SK-N-SH (cell line): ENCODE measurements at regions of chr7 and their contacts with region 1.

Region 1: GRCh38 chr7:5997222-5997808 is 11.5 kb downstream of the PMS2 start:
- DNase-seq: peak; percentile 74
- H3K4me3 ChIP-seq: no peak overlapping the region; a peak in 1 of 4 replicates
- H3K27ac ChIP-seq: 0 out of 4 replicates have a peak overlapping the region, but pooled peaks of 1 of the 2 experiments have one; percentile 5
- H3K4me1 ChIP-seq: peaks cover 0 to 3% of the 10 kb centered on the region in 2 experiments; a peak in 2 of 4 replicates
- H3K27me3 ChIP-seq: no peaks in the 10 kb centered on the region
- CTCF ChIP-seq: peak; percentile 95
- EP300 ChIP-seq: no peak
- RAD21 ChIP-seq: peak; percentile 89

Region 2: DNA sequence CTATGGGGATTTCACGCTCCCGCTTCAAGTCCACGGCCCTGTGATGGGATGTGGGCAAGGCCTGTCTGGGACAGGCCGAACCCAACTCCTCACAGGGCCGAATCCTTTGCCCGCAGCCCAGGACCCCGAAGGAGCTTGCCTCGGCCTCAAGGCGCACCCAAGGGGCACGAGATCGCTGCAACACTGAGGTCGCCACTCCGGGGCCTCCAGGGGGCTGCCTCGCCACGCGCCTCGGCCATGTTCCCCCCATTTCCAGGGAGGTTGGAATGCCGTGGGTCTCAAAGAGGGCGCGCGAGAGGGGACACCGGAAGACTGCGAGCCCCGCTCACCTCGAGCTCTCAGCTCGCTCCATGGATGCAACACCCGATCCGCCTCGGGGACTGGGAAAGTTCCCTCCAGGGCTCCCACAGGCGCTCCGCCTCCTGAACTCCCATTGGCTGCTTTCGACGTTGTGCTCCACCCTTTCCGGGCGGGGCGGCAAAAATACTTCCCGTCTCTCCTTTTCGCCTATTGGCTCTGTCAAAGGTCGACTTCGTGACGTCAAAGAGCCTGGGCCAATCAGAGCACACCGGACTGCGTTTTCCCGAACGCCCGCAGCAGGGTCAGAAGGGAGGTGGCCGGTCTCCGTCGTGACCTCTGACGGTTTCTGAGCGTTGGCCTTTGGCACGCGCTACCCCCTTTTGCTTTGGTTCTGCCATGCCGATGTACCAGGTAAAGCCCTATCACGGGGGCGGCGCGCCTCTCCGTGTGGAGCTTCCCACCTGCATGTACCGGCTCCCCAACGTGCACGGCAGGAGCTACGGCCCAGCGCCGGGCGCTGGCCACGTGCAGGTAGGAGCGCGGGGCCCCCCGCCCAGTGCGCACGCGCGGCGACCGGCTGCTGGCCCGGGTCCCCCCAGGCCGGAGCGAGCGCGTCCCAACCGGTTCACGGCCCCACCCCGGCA is 11.6 kb after region 1 on chr7 and contains the starts of genes AIMP2 and PMS2:
- CTCF ChIA-PET with region 1: interaction called, 33 read pairs
- POLR2A ChIA-PET with region 1: interaction called, 3 read pairs
- DNase-seq: peak; percentile 99
- H3K4me3 ChIP-seq: peak within 1 kb of the TSS; percentile 68 to 96
- H3K27ac ChIP-seq: peak within 1 kb of the TSS; percentile 76 to 83
- H3K4me1 ChIP-seq: peaks cover 3 to 8% of the 10 kb centered on the region in 2 experiments; a peak in 1 of 4 replicates
- H3K27me3 ChIP-seq: no peaks in the 10 kb centered on the region
- CTCF ChIP-seq: peak; percentile 28
- EP300 ChIP-seq: no peak
- RAD21 ChIP-seq: peak; percentile 24; the same call in 1 of the 2 replicates
- polyA plus RNA-seq, gene AIMP2: 98.9 and 104 TPM in 2 replicates
- polyA plus RNA-seq, gene PMS2: 9.6 and 11.4 TPM in 2 replicates

Region 3: DNA sequence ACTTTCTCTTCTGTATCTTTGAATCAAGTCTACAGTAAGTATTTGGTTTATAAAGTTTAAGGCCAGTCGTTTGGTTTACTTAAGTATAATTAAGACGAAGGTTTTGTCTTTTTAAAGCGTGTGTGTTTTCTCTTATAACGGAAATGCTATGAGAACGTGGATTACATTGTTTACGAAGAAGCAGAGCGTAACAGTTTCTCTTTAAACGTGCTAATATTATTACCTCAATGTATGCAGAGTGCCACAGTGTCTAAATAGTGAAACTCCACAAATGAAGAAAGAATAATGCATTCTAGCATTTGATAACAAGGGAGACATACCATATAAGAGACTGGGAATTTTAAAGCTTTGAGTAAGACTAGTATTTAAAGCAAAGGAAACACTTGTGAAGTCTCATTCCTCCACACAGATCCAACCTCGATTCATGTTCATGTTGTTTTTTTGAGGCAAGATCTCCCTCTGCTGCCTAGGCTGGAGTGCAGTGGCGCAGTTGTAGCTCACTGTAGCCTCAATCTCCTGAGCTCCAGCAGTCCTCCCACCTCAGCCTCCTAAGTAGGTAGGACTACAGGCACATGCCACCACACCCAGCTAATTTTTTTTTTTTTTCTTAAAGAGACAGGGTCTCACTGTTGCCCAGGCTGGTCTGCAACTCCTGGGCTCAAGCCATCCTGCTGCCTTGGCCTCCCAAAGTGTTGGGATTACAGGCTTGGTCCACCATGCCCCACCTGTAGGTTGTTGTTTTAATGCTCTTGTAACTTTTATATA is 109.0 kb after region 1 on chr7:
- CTCF ChIA-PET with region 1: interaction called, 11 read pairs
- POLR2A ChIA-PET with region 1: no interaction called
- DNase-seq: no peak
- H3K4me3 ChIP-seq: peak overlapping the region; percentile 60 to 96; a peak in 3 of 4 replicates
- H3K27ac ChIP-seq: peak overlapping the region; percentile 3 to 68; a peak in 3 of 4 replicates
- H3K4me1 ChIP-seq: peaks cover 5 to 7% of the 10 kb centered on the region in 2 experiments; a peak in 2 of 4 replicates
- H3K27me3 ChIP-seq: no peaks in the 10 kb centered on the region
- CTCF ChIP-seq: peak; percentile 45
- EP300 ChIP-seq: no peak
- RAD21 ChIP-seq: peak; percentile 63

Region 4: GRCh38 chr7:6205971-6206660 is 208.8 kb after region 1 on chr7:
- CTCF ChIA-PET with region 1: no interaction called
- POLR2A ChIA-PET with region 1: no interaction called
- DNase-seq: peak; percentile 82
- H3K4me3 ChIP-seq: no peak overlapping the region
- H3K27ac ChIP-seq: peak overlapping the region; percentile 76 to 77
- H3K4me1 ChIP-seq: peaks cover 5 to 12% of the 10 kb centered on the region in 2 experiments
- H3K27me3 ChIP-seq: no peaks in the 10 kb centered on the region
- CTCF ChIP-seq: no peak
- EP300 ChIP-seq: peak in 1 of 2 experiments; percentile 95; a peak in 3 of 4 replicates
- RAD21 ChIP-seq: peak; percentile 54